CD4-positive, alpha-beta memory T cell (primary cell): ENCODE measurements at regions of chr9 and their contacts with region 1.

Region 1: GRCh38 chr9:136482793-136483588 is at the start of gene SEC16A:
- DNase-seq: peak; percentile 98 to 99 (median 98)
- H3K4me3 ChIP-seq: peak within 1 kb of the TSS; percentile 85 to 87
- H3K4me3 Mint-ChIP-seq: peak within 1 kb of the TSS; percentile 89 to 99 (median 96)
- H3K27ac ChIP-seq: peak within 1 kb of the TSS; percentile 99
- H3K27ac Mint-ChIP-seq: peak within 1 kb of the TSS; percentile 97 to 100 (median 99)
- H3K4me1 ChIP-seq: peaks cover 42% of the 10 kb centered on the region
- H3K4me1 Mint-ChIP-seq: peaks cover 20 to 52% (median 33%) of the 10 kb centered on the region in 4 donors
- H3K27me3 ChIP-seq: no peaks in the 10 kb centered on the region
- H3K27me3 Mint-ChIP-seq: no peaks in the 10 kb centered on the region
- total RNA-seq, gene SEC16A: 82.9 to 87.7 TPM

Region 2: GRCh38 chr9:136011703-136012521 is 471.1 kb before region 1 on chr9:
- CTCF ChIA-PET with region 1: no interaction called
- POLR2A ChIA-PET with region 1: no interaction called
- intact Hi-C with region 1: no loop called
- DNase-seq: no peak
- H3K4me3 ChIP-seq: no peak overlapping the region
- H3K4me3 Mint-ChIP-seq: no peak overlapping the region
- H3K27ac ChIP-seq: no peak overlapping the region
- H3K27ac Mint-ChIP-seq: no peak overlapping the region
- H3K4me1 ChIP-seq: no peaks in the 10 kb centered on the region
- H3K4me1 Mint-ChIP-seq: no peaks in the 10 kb centered on the region
- H3K27me3 ChIP-seq: no peaks in the 10 kb centered on the region
- H3K27me3 Mint-ChIP-seq: no peaks in the 10 kb centered on the region

Region 3: DNA sequence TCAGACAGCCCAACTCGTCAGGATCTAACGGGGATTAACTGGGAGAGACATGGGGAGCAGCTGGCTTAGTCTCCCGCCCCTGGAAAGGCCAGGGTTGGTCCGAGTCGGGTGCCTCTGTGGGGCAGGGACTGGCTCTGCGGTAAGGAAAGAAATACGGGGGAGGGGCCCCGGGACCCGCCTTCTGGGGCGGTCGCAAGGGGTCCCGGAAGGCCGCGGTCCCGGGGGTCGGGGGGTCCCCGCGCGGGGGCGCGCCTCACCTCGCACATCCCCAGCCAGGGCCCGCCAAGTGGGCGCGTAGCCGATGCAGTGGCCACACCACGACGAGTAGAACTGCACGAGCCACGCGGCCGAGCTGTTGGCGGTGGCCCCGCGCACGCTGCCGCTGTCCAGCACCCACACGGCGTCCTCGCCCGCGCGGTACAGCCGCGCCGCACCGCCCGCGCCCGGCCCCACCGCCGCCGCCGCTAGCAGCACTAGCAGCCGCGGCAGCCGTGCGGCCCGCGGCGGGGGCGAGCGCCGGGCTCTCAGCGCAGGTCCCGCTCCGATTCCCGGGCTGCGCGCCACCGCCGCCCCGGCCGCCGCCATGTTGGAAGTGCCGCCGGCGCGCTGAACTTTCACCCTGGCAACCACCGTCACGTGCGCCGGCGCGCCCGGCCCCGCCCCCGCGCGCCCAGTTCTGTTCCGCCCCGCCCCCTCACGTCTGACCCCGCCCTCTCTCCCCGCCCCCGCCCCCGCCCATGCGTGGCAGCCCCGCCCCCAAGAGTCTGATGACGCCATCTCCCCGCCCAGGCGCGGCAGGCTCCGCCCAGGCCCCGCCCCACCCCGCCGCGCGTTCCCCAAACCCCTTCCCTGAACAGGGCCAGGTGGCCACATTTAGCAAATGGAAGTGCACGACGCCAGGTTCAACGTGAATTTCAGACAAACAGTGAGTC is 237.5 kb before region 1 on chr9 and contains the start of gene QSOX2:
- CTCF ChIA-PET with region 1: no interaction called
- POLR2A ChIA-PET with region 1: no interaction called
- intact Hi-C with region 1: loop called (anchors 5 kb)
- DNase-seq: peak; percentile 78 to 89 (median 84)
- H3K4me3 ChIP-seq: peak within 1 kb of the TSS; percentile 50 to 57
- H3K4me3 Mint-ChIP-seq: peak within 1 kb of the TSS; percentile 91 to 97 (median 94)
- H3K27ac ChIP-seq: peak within 1 kb of the TSS; percentile 32
- H3K27ac Mint-ChIP-seq: peak within 1 kb of the TSS; percentile 85 to 94 (median 92)
- H3K4me1 ChIP-seq: peaks cover 35% of the 10 kb centered on the region
- H3K4me1 Mint-ChIP-seq: peaks cover 25 to 40% (median 32%) of the 10 kb centered on the region in 4 donors
- H3K27me3 ChIP-seq: no peaks in the 10 kb centered on the region
- H3K27me3 Mint-ChIP-seq: no peaks in the 10 kb centered on the region
- total RNA-seq, gene QSOX2: 14.8 to 15.0 TPM

Region 4: GRCh38 chr9:136339173-136339957 is 143.6 kb before region 1 on chr9:
- CTCF ChIA-PET with region 1: no interaction called
- POLR2A ChIA-PET with region 1: no interaction called
- intact Hi-C with region 1: no loop called
- DNase-seq: peak in 3 of 5 donors; percentile 16 to 32 (median 28)
- H3K4me3 ChIP-seq: no peak overlapping the region
- H3K4me3 Mint-ChIP-seq: no peak overlapping the region
- H3K27ac ChIP-seq: no peak overlapping the region
- H3K27ac Mint-ChIP-seq: peak overlapping the region in 2 of 7 donors; percentile 32 to 50
- H3K4me1 ChIP-seq: no peaks in the 10 kb centered on the region
- H3K4me1 Mint-ChIP-seq: no peaks in the 10 kb centered on the region
- H3K27me3 ChIP-seq: no peaks in the 10 kb centered on the region
- H3K27me3 Mint-ChIP-seq: no peaks in the 10 kb centered on the region

Region 5: DNA sequence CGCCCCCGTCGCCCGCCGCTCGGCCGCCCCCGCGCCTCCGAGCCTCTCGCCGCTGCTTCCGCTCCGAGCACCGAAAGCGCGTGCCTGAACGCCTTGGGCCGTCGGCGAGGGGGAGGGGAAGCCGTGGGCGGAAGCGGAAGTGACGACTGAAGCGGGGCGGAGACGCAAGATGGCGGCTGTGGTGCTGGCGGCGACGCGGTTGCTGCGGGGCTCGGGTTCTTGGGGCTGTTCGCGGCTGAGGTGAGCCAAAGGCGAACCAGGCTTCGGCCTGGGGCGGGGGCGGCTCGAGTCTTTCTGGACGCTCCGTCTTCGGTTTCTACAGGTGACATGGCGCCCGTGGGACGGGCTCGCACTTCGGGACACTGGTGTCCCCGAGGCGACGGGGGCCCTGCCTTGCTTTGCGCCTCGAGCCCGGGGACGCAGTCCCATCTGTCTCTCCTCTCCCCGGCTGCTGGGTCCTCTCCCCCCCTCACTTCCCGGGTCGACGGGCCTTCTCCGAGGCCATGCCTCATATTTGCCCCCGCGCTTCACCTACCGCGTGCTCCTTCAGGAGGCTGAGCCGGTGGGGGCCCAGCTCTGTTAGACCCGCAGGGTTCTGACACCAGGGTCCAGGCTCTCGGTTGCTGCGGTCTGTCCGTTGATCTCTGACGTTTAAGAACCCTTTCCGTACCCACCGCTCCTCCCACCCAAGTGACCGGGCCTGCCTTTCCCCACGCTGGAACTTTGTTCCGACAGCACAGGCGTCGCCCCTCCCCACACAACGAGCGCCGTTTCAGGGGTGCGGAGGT is 72.3 kb before region 1 on chr9 and contains the starts of genes ENTR1 and PMPCA:
- CTCF ChIA-PET with region 1: no interaction called
- POLR2A ChIA-PET with region 1: no interaction called
- intact Hi-C with region 1: loop called (anchors 1 kb)
- DNase-seq: peak; percentile 93 to 94 (median 93)
- H3K4me3 ChIP-seq: peak within 1 kb of the TSS; percentile 71 to 85
- H3K4me3 Mint-ChIP-seq: peak within 1 kb of the TSS; percentile 87 to 92 (median 90)
- H3K27ac ChIP-seq: peak within 1 kb of the TSS; percentile 93
- H3K27ac Mint-ChIP-seq: peak within 1 kb of the TSS; percentile 81 to 96 (median 94)
- H3K4me1 ChIP-seq: peaks cover 35% of the 10 kb centered on the region
- H3K4me1 Mint-ChIP-seq: peaks cover 23 to 59% (median 40%) of the 10 kb centered on the region in 4 donors
- H3K27me3 ChIP-seq: no peaks in the 10 kb centered on the region
- H3K27me3 Mint-ChIP-seq: no peaks in the 10 kb centered on the region
- total RNA-seq, gene ENTR1: 82.9 to 85.9 TPM
- total RNA-seq, gene PMPCA: 71.8 to 73.3 TPM

Region 6: GRCh38 chr9:136539427-136540421 is 56.7 kb after region 1 on chr9:
- CTCF ChIA-PET with region 1: interaction called, 58 read pairs
- POLR2A ChIA-PET with region 1: interaction called, 26 read pairs
- intact Hi-C with region 1: loop called (anchors 1 kb)
- DNase-seq: peak; percentile 70 to 97 (median 76)
- H3K4me3 ChIP-seq: peak overlapping the region; percentile 52 to 59
- H3K4me3 Mint-ChIP-seq: peak overlapping the region; percentile 86 to 96 (median 91)
- H3K27ac ChIP-seq: peak overlapping the region; percentile 77
- H3K27ac Mint-ChIP-seq: peak overlapping the region; percentile 94 to 100 (median 97)
- H3K4me1 ChIP-seq: peaks cover 88% of the 10 kb centered on the region
- H3K4me1 Mint-ChIP-seq: peaks cover 25 to 69% (median 52%) of the 10 kb centered on the region in 4 donors
- H3K27me3 ChIP-seq: no peaks in the 10 kb centered on the region
- H3K27me3 Mint-ChIP-seq: no peaks in the 10 kb centered on the region

Region 7: GRCh38 chr9:136644598-136645351 is 161.8 kb after region 1 on chr9:
- CTCF ChIA-PET with region 1: interaction called, 10 read pairs
- POLR2A ChIA-PET with region 1: no interaction called
- intact Hi-C with region 1: loop called (anchors 1 kb)
- DNase-seq: peak; percentile 61 to 77 (median 67)
- H3K4me3 ChIP-seq: no peak overlapping the region
- H3K4me3 Mint-ChIP-seq: no peak overlapping the region
- H3K27ac ChIP-seq: no peak overlapping the region
- H3K27ac Mint-ChIP-seq: no peak overlapping the region
- H3K4me1 ChIP-seq: peaks cover 10% of the 10 kb centered on the region
- H3K4me1 Mint-ChIP-seq: peaks cover 0 to 8% (median 0%) of the 10 kb centered on the region in 4 donors
- H3K27me3 ChIP-seq: peaks cover 13% of the 10 kb centered on the region
- H3K27me3 Mint-ChIP-seq: peaks cover 16 to 18% of the 10 kb centered on the region in 2 donors

Region 8: DNA sequence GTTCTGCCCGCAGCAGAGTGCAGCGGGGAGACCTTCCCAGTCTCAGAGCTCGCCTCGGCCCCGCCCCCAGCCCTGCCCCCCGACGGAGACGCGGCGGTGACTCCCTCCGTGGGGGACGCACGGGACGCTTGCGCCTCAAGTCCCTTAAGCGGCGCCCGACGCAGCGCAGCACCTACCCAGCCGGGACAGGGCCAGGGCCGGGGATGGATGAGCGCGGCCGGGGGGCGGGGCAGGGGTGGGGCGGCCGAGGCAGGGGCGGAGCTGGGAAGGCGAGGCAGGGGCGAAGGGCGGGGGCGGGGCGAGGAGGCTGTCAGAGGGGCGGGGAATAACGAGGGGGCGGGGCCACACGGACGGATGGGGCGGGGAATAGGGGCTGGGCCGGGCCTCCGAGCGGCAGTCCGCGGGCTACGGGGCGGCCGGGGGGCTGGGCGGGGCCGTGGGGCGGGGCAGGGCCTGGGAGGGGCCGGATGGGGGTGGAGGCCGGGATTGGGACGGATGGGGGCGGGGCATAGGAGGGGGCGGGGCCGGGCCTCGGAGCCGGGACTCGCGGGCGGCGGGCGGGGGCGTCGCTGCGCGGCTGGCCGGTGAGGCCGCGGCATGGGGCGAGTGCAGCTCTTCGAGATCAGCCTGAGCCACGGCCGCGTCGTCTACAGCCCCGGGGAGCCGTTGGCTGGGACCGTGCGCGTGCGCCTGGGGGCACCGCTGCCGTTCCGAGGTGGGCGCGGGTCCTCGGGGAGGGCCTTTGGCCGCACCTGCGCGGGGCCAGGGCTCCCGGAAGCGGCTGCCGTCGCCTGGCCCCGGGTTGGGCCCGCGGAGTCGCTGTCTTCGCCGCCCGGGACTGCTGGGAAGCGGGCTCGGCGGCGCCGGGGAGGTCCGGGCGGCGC is 1122.4 kb after region 1 on chr9 and contains the start of gene ARRDC1:
- CTCF ChIA-PET with region 1: no interaction called
- POLR2A ChIA-PET with region 1: no interaction called
- intact Hi-C with region 1: loop called (anchors 5 kb)
- DNase-seq: peak; percentile 85 to 94 (median 93)
- H3K4me3 ChIP-seq: peak within 1 kb of the TSS in 1 of 2 donors; percentile 63
- H3K4me3 Mint-ChIP-seq: peak within 1 kb of the TSS; percentile 80 to 88 (median 84)
- H3K27ac ChIP-seq: peak within 1 kb of the TSS; percentile 70
- H3K27ac Mint-ChIP-seq: peak within 1 kb of the TSS in 4 of 7 donors; percentile 52 to 75 (median 68)
- H3K4me1 ChIP-seq: peaks cover 15% of the 10 kb centered on the region
- H3K4me1 Mint-ChIP-seq: peaks cover 7 to 37% (median 20%) of the 10 kb centered on the region in 4 donors
- H3K27me3 ChIP-seq: no peaks in the 10 kb centered on the region
- H3K27me3 Mint-ChIP-seq: no peaks in the 10 kb centered on the region
- total RNA-seq, gene ARRDC1: 82.3 to 86.2 TPM